ENCODE measurements at regions of chr4 and their contacts with region 1.

Region 1: DNA sequence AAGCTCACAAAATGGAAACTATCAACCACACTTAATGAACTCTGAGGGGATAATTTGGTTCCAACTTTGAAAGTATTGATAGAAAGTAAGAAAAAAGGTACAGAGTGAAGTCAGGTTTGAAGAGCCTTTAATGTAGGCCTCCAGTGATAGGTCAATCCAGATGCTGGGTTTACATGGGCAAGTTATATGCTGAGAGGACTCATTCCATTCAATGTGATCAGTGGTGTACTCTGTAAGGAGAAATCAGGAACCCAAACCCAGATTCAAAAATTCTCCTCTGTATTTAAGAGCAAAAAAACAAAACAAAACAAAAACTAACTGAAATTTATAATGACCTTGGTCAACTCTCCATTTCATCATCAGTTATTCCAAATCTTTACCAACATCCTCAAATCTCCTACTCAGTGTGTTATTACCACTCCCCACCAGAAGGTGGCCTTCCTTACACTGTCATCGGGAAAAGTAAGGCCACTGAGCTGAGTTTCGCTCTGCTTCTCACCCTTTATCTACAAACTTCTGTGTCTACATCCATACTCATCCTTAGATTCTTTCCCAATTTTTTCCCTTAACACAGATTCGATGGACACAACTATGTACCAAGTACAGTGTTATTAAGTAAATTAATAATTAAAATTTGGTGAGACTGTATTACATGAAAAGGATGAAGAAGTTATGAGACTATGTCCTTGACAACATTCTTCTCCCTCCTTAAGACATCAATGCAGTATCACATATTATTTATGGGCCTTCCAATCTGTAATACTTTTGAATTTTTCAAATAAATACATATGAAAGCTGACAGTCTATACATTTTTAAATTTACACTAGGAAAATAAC is 88.3 kb downstream of the ZAR1 start:
- DNase-seq: peak; percentile 87
- H3K4me3 ChIP-seq: no peak overlapping the region
- H3K27ac ChIP-seq: no peak overlapping the region
- H3K4me1 ChIP-seq: no peaks in the 10 kb centered on the region
- H3K27me3 ChIP-seq: no peaks in the 10 kb centered on the region
- CTCF ChIP-seq: peak; percentile 81 to 89 (median 87)
- POLR2A ChIP-seq: no peak

Region 2: GRCh38 chr4:48518143-48518542 is 60.2 kb before region 1 on chr4:
- intact Hi-C with region 1: no loop called
- DNase-seq: no peak
- H3K4me3 ChIP-seq: no peak overlapping the region
- H3K27ac ChIP-seq: no peak overlapping the region
- H3K4me1 ChIP-seq: no peaks in the 10 kb centered on the region
- H3K27me3 ChIP-seq: no peaks in the 10 kb centered on the region
- CTCF ChIP-seq: no peak
- POLR2A ChIP-seq: no peak

Region 3: GRCh38 chr4:48963042-48963679 is 384.8 kb after region 1 on chr4:
- intact Hi-C with region 1: loop called (anchors 5 kb)
- DNase-seq: peak; percentile 81
- H3K4me3 ChIP-seq: no peak overlapping the region
- H3K27ac ChIP-seq: no peak overlapping the region
- H3K4me1 ChIP-seq: no peaks in the 10 kb centered on the region
- H3K27me3 ChIP-seq: no peaks in the 10 kb centered on the region
- CTCF ChIP-seq: peak; percentile 88 to 94 (median 92)
- POLR2A ChIP-seq: no peak